GM12878 (cell line): ENCODE measurements at regions of chr18 and their contacts with region 1.

Region 1: DNA sequence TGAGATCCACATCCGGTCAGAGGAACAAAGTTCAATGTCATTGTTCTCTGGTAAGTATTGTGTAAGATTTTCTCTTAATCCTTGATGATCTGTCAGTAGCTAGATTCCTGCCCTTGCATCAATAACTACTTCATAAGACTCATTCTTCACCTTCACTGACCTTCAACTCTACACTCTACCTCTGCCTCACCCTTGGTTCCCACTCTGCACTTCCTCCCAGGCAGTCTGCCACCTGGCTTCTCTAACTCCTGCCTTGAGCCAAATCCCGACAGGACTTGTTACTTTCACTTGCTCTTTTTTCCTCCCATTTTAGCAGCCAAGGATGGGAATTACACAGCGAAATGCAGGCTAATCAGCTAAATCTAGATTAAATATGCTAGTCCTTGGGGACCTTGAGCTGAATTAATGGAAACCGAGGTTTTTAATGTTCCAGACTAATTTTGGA is 190.7 kb downstream of the DLGAP1 start:
- DNase-seq: no peak
- ATAC-seq: peak; percentile 4; the same call in 2 of the 3 replicates
- H3K4me3 ChIP-seq: no peak overlapping the region
- H3K27ac ChIP-seq: no peak overlapping the region; the same call in 1 of the 2 replicates
- H3K4me1 ChIP-seq: no peaks in the 10 kb centered on the region
- H3K27me3 ChIP-seq: no peaks in the 10 kb centered on the region
- CTCF ChIP-seq: no peak
- EP300 ChIP-seq: no peak
- POLR2A ChIP-seq: no peak
- RAD21 ChIP-seq: no peak

Region 2: DNA sequence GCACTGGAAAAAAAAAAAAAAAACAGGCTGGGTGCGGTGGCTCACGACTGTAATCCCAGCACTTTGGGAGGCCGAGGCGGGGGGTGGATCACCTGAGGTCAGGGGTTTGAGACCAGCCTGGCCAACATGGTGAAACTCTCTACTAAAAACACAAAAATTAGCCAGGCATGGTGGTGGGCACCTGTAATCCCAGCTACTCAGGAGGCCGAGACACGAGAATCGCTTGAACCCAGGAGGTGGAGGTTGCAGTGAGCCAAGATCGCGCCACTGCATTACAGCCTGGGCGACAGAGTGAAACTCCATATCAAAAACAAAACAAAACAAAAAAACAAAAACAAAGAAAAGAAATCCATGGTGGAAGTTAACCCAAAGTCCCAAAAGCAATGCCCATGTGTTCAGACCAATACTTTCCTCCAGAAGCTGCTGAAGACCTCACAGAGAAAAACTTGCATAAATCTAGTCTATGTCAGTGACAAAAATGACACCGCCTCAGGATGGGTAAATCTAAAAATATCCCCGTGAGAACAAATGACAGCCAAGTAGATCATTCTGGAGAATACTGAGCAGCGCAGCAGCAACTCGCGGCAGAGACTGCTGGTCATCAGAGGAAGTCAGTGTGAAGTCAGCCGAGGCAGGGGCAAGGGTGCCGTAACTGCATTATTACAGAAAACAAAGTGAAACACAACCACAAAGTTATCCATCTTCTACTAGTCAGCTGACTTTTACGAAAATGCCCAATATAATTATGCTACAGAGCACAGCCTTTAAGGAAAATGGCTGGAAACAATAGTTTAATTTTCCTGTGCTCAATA is 1292.4 kb before region 1 on chr18:
- CTCF ChIA-PET with region 1: no interaction called
- POLR2A ChIA-PET with region 1: no interaction called
- RAD21 ChIA-PET with region 1: no interaction called
- SMC1A ChIA-PET with region 1: no interaction called
- in situ Hi-C with region 1: loop called (anchors 25 kb)
- intact Hi-C with region 1: no loop called
- DNase-seq: peak; percentile 90
- ATAC-seq: peak; percentile 89
- H3K4me3 ChIP-seq: peak overlapping the region; percentile 60
- H3K27ac ChIP-seq: peak overlapping the region; percentile 94
- H3K4me1 ChIP-seq: peaks cover 51% of the 10 kb centered on the region
- H3K27me3 ChIP-seq: no peaks in the 10 kb centered on the region
- CTCF ChIP-seq: no peak
- EP300 ChIP-seq: peak; percentile 32 to 48; a peak in 1 of 4 replicates
- POLR2A ChIP-seq: peak; percentile 78
- RAD21 ChIP-seq: no peak

Region 3: DNA sequence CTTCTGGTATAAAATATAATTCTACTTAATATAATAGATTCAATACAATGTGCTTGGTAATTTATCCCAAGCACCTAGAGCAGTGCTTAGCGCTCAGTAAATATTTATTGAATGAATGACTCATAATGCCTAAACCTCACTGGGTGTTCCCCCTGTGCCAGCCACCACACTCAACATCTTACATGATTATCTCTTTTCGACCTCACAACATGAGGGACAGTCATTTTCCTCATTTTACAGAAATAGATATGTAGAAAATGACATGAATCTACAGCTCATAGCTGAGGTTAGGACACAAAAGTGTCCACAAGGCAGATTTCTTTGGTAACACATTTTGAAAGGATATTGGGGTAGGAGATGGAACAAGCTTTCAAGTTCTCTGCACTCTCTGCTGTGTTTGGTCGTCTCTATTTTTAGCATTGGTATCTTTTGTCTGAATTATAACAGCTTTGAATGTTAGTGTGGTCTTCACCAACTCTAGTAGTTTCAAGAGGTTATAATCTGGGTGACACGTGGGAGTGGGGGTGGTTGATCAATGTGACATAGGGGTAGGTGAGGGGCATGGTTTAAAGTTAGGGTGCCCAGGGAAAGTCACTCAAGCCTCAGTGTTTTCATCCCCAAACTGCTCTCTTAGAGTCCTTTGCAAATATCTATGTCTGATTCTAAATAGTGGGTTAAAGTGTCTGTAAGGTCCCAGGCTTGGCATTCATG is 1054.4 kb before region 1 on chr18:
- CTCF ChIA-PET with region 1: no interaction called
- POLR2A ChIA-PET with region 1: no interaction called
- RAD21 ChIA-PET with region 1: no interaction called
- SMC1A ChIA-PET with region 1: no interaction called
- in situ Hi-C with region 1: no loop called
- intact Hi-C with region 1: no loop called
- DNase-seq: peak; percentile 20
- ATAC-seq: peak; percentile 97
- H3K4me3 ChIP-seq: no peak overlapping the region
- H3K27ac ChIP-seq: no peak overlapping the region
- H3K4me1 ChIP-seq: no peaks in the 10 kb centered on the region
- H3K27me3 ChIP-seq: no peaks in the 10 kb centered on the region
- CTCF ChIP-seq: no peak
- EP300 ChIP-seq: peak in 1 of 2 experiments; percentile 59; a peak in 1 of 4 replicates
- POLR2A ChIP-seq: no peak
- RAD21 ChIP-seq: no peak

Region 4: DNA sequence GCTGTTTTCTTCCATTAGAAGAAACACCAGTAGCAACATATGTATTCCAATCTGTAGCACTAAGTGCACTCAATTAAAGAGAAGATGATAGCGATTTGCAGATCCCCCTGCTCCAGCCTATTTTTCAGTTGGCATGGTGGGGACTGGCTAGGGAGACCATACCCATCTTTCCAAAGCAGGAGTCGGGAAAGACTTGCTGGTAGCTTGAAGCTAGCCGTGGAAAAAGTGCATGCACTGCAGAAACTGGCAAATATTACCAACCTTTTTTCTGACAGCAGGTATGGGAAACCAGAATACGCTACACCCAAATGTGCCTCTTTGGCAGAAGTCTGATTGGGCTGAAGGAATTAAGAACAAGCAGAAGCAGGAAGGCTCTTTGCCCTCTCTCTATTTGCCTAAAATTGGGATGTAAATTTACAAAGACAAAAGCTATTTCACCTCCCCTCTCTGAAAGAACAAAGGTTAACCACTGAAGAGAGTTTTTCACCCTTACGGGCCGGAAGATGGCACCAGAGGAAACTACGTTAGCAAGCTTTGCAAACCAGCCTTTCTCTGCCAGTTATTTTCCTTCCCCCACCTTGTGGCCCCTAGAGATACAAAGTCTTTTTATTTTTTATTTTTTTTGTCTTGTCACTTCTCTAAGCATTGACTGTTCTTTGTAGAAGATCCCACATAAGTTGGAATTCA is 82.3 kb before region 1 on chr18:
- CTCF ChIA-PET with region 1: interaction called, 4 read pairs
- POLR2A ChIA-PET with region 1: interaction called, 3 read pairs
- RAD21 ChIA-PET with region 1: interaction called, 11 read pairs
- SMC1A ChIA-PET with region 1: interaction called, 19 read pairs
- in situ Hi-C with region 1: no loop called
- intact Hi-C with region 1: no loop called
- DNase-seq: no peak
- ATAC-seq: peak; percentile 84
- H3K4me3 ChIP-seq: no peak overlapping the region
- H3K27ac ChIP-seq: no peak overlapping the region
- H3K4me1 ChIP-seq: no peaks in the 10 kb centered on the region
- H3K27me3 ChIP-seq: no peaks in the 10 kb centered on the region
- CTCF ChIP-seq: peak in 1 of 3 experiments; percentile 35; a peak in 2 of 6 replicates
- EP300 ChIP-seq: no peak
- POLR2A ChIP-seq: no peak
- RAD21 ChIP-seq: peak; percentile 38

Region 5: GRCh38 chr18:4251873-4252272 is 12.5 kb before region 1 on chr18:
- CTCF ChIA-PET with region 1: interaction called, 17 read pairs
- POLR2A ChIA-PET with region 1: interaction called, 20 read pairs
- RAD21 ChIA-PET with region 1: interaction called, 101 read pairs
- SMC1A ChIA-PET with region 1: interaction called, 318 read pairs
- in situ Hi-C with region 1: no loop called
- intact Hi-C with region 1: no loop called
- DNase-seq: no peak
- ATAC-seq: peak; percentile 75
- H3K4me3 ChIP-seq: no peak overlapping the region
- H3K27ac ChIP-seq: no peak overlapping the region
- H3K4me1 ChIP-seq: no peaks in the 10 kb centered on the region; the same call in 1 of the 2 replicates
- H3K27me3 ChIP-seq: no peaks in the 10 kb centered on the region
- CTCF ChIP-seq: no peak
- EP300 ChIP-seq: peak; percentile 33 to 40; a peak in 2 of 4 replicates
- POLR2A ChIP-seq: no peak
- RAD21 ChIP-seq: no peak

Region 6: GRCh38 chr18:4283746-4284291 is 19.4 kb after region 1 on chr18:
- CTCF ChIA-PET with region 1: interaction called, 4 read pairs
- POLR2A ChIA-PET with region 1: interaction called, 13 read pairs
- RAD21 ChIA-PET with region 1: interaction called, 28 read pairs
- SMC1A ChIA-PET with region 1: interaction called, 49 read pairs
- in situ Hi-C with region 1: no loop called
- intact Hi-C with region 1: no loop called
- DNase-seq: no peak
- ATAC-seq: peak; percentile 45
- H3K4me3 ChIP-seq: no peak overlapping the region
- H3K27ac ChIP-seq: no peak overlapping the region
- H3K4me1 ChIP-seq: no peaks in the 10 kb centered on the region
- H3K27me3 ChIP-seq: no peaks in the 10 kb centered on the region
- CTCF ChIP-seq: no peak
- EP300 ChIP-seq: no peak
- POLR2A ChIP-seq: no peak
- RAD21 ChIP-seq: no peak